ENCODE measurements at regions of chr20 and their contacts with region 1.

Region 1: DNA sequence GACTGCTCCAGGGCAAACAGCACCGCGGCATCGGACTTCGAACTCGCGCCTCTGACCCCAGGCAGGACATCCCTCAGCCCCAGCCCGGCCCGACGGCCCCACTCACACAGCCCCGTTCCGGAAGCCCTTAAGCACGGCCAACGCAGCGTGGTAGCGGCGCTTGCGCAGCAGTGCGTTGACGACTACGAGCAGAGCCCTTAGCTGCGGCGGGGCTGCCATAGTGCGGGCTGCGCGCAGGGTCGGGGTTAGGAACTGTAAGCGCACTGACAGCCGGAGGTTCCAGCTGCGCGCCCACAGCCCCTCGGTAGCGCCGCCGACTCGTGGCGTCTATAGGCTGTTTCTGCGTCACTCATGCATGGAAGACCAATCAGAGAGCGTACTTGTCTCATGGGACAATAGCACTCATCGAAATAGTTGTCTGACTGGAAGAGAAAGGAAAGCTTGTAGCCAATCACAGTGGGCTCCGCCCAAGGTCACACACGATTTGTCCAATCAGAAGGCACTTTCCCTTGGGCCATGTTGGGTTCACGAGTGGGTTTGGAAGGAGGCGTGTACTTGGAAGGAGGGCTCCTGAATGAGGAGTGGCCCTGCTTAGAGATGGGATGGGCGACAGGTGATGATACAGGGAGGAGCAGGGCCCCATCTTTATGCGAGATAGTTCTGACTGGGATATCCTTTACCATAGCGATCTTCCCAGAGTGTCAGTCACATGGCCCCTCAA is at the start of gene PXMP4:
- DNase-seq: peak; percentile 93
- ATAC-seq: peak; percentile 99
- H3K4me3 ChIP-seq: peak within 1 kb of the TSS; percentile 59 to 83
- H3K27ac ChIP-seq: peak within 1 kb of the TSS in 1 of 2 donors; percentile 29
- H3K4me1 ChIP-seq: no peaks in the 10 kb centered on the region
- H3K27me3 ChIP-seq: no peaks in the 10 kb centered on the region
- total RNA-seq, gene PXMP4: 4.4 to 7.5 TPM

Region 2: GRCh38 chr20:33387177-33387576 is 333.0 kb before region 1 on chr20:
- intact Hi-C with region 1: no loop called
- DNase-seq: no peak
- ATAC-seq: no peak
- H3K4me3 ChIP-seq: no peak overlapping the region
- H3K27ac ChIP-seq: no peak overlapping the region
- H3K4me1 ChIP-seq: no peaks in the 10 kb centered on the region
- H3K27me3 ChIP-seq: no peaks in the 10 kb centered on the region

Region 3: DNA sequence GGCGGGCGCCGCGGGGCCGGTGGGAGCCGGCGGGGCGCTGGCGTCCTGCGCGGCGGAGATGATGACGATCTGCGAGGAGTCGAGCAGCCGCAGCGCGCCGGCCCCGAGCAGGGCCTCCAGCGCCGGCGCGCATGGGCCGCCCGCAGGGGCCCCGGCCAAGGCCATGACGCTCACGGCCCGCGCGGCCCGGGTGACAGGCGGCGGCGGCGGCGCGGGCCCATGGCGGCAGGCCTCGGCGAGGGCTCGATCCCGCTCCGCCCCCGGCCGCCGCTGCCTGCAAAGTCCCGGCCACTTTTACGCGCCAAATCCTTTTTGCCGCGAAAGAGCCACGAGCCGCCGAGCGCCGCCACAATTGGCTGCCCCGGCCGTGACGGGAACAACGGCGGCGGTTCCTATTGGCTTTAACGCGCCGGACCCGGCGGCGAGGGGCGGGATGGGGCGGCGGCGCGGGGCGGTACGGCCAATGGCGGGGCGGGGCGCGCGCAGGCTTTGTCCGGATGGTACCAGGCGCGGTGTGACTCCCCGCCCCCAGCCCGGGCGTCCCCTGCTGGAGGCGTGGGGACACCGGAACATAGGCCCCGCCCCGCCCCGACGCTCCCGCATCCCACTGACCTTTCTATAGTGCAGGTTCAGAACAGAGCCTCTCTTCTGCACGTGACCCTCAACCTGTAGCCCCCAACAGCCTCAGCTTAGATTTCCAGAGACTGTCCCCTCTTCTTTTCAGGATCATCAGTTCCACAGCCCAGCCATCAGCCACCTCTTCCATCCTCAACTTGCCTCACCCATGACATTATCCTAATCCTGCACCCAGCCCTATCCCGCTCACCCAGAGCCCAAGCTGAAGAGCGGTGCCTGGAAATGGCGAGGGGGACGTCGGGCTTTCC is 33.8 kb before region 1 on chr20 and contains the start of gene E2F1:
- intact Hi-C with region 1: loop called in 1 of 2 experiments (anchors 5 kb)
- DNase-seq: peak; percentile 97 to 98
- ATAC-seq: peak; percentile 97
- H3K4me3 ChIP-seq: peak within 1 kb of the TSS; percentile 40 to 47
- H3K27ac ChIP-seq: no peak within 1 kb of the TSS
- H3K4me1 ChIP-seq: no peaks in the 10 kb centered on the region
- H3K27me3 ChIP-seq: no peaks in the 10 kb centered on the region
- total RNA-seq, gene E2F1: 1.4 to 1.5 TPM